ENCODE measurements at regions of chr10 and their contacts with region 1.

Region 1: GRCh38 chr10:84537447-84537931 is 209.1 kb downstream of the CCSER2 start:
- DNase-seq: peak; percentile 56 to 66
- H3K4me3 ChIP-seq: no peak overlapping the region
- H3K27ac ChIP-seq: no peak overlapping the region
- H3K4me1 ChIP-seq: peaks cover 12% of the 10 kb centered on the region
- H3K27me3 ChIP-seq: no peaks in the 10 kb centered on the region
- CTCF ChIP-seq: peak; percentile 99

Region 2: DNA sequence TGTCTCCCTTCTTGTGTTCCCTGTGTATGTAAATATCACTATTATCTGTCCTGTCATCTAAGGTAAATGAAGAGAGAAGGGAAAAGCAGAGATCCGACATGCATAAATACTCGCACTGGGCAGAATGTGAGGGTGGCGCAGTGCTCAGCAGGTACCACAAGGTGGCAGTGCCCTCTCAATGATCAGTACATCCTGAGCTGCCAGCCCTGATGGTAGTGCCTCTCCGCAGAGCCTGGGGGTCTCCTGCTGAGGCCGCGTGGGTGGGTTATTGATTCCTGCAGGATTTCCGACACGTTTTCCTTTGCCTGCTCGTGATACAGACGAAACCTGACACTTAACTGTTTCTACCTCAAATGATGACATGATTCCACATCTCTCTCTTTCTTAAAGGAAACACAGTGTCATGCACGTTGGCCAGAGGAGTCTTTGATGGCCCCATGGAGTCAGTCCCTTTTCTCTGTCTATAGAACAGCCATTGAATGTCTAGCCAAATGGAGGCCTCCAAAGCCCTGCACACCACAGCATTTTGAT is 272.8 kb before region 1 on chr10:
- CTCF ChIA-PET with region 1: interaction called, 6 read pairs
- POLR2A ChIA-PET with region 1: no interaction called
- intact Hi-C with region 1: loop called (anchors 1 kb)
- DNase-seq: peak in 1 of 2 experiments; percentile 68
- H3K4me3 ChIP-seq: no peak overlapping the region
- H3K27ac ChIP-seq: no peak overlapping the region
- H3K4me1 ChIP-seq: peaks cover 7% of the 10 kb centered on the region
- H3K27me3 ChIP-seq: peaks cover 42% of the 10 kb centered on the region
- CTCF ChIP-seq: peak; percentile 98

Region 3: DNA sequence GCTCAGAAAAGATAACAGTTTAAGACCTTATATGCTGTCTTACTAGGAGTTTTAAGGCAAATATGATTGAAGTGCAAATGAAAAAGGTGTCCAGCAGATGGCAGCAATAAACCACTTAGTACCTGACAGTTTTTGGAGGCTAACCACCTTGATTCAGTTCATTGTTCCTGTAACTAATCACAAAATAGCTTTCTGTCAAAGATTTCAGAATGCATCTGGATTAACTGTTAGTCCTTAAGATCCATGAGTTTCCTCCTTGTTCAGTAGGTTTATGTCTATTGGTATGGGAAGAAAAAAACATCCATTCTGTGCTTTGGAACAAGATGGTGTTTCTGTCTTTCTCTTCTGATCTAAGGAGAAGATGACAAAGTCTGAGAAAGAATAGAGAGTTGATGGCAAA is 162.5 kb before region 1 on chr10:
- CTCF ChIA-PET with region 1: interaction called, 14 read pairs
- POLR2A ChIA-PET with region 1: interaction called, 4 read pairs
- intact Hi-C with region 1: loop called (anchors 1 kb)
- DNase-seq: peak; percentile 27 to 61
- H3K4me3 ChIP-seq: no peak overlapping the region
- H3K27ac ChIP-seq: no peak overlapping the region
- H3K4me1 ChIP-seq: peaks cover 10% of the 10 kb centered on the region
- H3K27me3 ChIP-seq: no peaks in the 10 kb centered on the region
- CTCF ChIP-seq: peak; percentile 87

Region 4: DNA sequence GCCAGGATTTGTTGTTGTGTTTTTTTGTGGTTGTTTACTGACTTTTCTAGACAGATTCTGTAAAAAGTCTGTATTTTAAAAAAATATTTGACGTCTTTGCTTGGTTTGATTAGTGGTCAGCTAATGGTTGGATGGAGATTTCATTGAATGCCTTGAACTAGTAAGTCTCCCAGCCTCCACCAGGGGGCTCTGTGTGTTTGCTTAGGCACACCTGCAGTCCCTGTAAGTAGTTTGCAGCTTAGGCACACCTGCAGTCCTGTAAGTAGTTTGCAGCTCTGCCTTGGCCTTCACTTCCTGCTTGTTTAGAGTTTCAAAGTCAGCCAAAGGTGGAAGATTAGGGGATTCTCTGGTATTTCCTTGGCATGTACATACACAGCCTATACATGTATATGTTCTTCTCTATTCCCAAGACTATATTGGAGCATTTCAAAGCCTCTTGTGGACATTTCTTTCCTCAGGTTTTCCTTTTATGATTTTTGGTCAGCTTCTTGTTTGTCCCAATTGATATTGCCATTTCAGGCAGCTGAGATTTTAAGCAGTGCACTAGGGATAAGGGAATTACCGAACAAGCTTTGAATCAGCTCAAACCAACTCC is 107.5 kb before region 1 on chr10:
- CTCF ChIA-PET with region 1: interaction called, 45 read pairs
- POLR2A ChIA-PET with region 1: interaction called, 7 read pairs
- intact Hi-C with region 1: loop called (anchors 1 kb)
- DNase-seq: peak; percentile 67 to 74
- H3K4me3 ChIP-seq: no peak overlapping the region
- H3K27ac ChIP-seq: no peak overlapping the region
- H3K4me1 ChIP-seq: peaks cover 7% of the 10 kb centered on the region
- H3K27me3 ChIP-seq: no peaks in the 10 kb centered on the region
- CTCF ChIP-seq: peak; percentile 96

Region 5: DNA sequence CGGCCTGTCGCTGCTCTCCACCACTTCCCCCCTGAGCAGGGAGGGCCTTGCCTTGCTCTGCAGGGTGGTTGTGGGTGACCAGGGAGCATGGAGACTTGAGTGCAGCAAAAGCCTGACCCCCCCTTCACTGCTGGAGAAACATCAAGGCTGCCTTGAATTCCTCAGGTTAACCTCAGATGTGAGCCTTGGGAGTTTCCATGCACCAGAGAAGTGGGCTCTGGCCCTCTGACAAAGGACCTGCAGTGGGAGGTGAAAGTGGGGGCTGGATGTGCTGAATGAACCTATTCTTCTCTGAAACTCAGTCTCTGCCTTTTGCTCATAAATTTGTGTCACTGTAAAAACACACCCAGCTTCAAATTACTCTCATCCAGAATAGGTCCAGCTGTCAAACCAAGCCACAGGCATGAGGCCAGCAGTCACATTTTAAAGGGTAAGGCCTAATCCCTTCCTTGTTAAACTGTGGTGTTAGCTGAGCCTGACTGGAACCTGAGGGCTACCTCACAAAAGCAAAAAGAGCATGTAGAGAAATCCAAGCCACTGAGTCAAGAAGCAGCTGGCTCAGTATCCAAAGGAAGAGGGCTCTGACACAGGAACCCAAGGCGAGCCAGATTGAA is 147.7 kb after region 1 on chr10:
- CTCF ChIA-PET with region 1: no interaction called
- POLR2A ChIA-PET with region 1: no interaction called
- intact Hi-C with region 1: no loop called
- DNase-seq: no peak
- H3K4me3 ChIP-seq: no peak overlapping the region
- H3K27ac ChIP-seq: no peak overlapping the region
- H3K4me1 ChIP-seq: no peaks in the 10 kb centered on the region
- H3K27me3 ChIP-seq: 0 out of 2 replicates have a peak, but pooled peaks cover 3% of the 10 kb centered on the region
- CTCF ChIP-seq: no peak

Region 6: GRCh38 chr10:85333594-85333993 is 796.1 kb after region 1 on chr10:
- CTCF ChIA-PET with region 1: no interaction called
- POLR2A ChIA-PET with region 1: interaction called, 11 read pairs
- intact Hi-C with region 1: no loop called
- DNase-seq: no peak
- H3K4me3 ChIP-seq: no peak overlapping the region
- H3K27ac ChIP-seq: no peak overlapping the region
- H3K4me1 ChIP-seq: no peaks in the 10 kb centered on the region
- H3K27me3 ChIP-seq: no peaks in the 10 kb centered on the region
- CTCF ChIP-seq: no peak